Dorsolateral prefrontal cortex (tissue), 120 donors: ENCODE measurements at regions of chrX and their contacts with region 1.

Region 1: DNA sequence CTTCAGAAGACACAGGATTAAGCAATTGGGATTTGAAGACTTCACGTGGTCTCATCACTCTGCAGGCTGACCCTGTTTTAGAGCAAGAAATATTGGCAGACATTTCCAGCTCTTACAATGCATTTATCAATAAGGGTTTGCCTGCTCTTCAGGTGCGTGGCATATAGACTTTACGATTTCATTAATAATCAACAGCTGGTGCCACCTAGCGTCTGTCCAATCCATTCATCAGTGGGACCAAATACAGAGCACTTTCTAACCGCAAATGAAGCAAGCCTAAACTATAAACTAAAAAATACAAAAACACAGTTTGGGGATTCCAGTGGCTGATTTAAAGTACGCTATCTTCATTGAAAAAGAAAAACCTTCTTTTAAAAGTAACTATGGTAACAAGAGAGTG is 125.4 kb upstream of the DMD start:
- DNase-seq: peak in 2 of 10 donors; percentile 25 to 35
- H3K4me3 ChIP-seq: peak overlapping the region in 49 of 59 donors; percentile 1 to 66 (median 47)
- H3K27ac ChIP-seq: no peak overlapping the region
- H3K27me3 ChIP-seq: peaks cover 0 to 47% (median 8%) of the 10 kb centered on the region in 45 donors
- CTCF ChIP-seq: peak in 54 of 56 donors; percentile 30 to 73 (median 53)

Region 2: GRCh38 chrX:32530802-32531403 is 805.9 kb before region 1 on chrX:
- intact Hi-C with region 1: loop called in 1 of 2 experiments (anchors 10 kb)
- DNase-seq: peak in 3 of 10 donors; percentile 14 to 40 (median 15)
- H3K4me3 ChIP-seq: peak overlapping the region in 50 of 59 donors; percentile 8 to 61 (median 38)
- H3K27ac ChIP-seq: no peak overlapping the region
- H3K27me3 ChIP-seq: peaks cover 0 to 60% (median 11%) of the 10 kb centered on the region in 45 donors
- CTCF ChIP-seq: peak in 55 of 56 donors; percentile 35 to 86 (median 71)

Region 3: GRCh38 chrX:32778965-32779364 is 557.8 kb before region 1 on chrX:
- intact Hi-C with region 1: loop called in 1 of 2 experiments (anchors 10 kb)
- DNase-seq: no peak
- H3K4me3 ChIP-seq: no peak overlapping the region
- H3K27ac ChIP-seq: no peak overlapping the region
- H3K27me3 ChIP-seq: peaks cover 0 to 37% (median 2%) of the 10 kb centered on the region in 45 donors
- CTCF ChIP-seq: peak in 28 of 56 donors; percentile 6 to 55 (median 33)